OCI-LY7 (cell line): ENCODE measurements at regions of chr1 and their contacts with region 1.

Region 1: GRCh38 chr1:111570781-111571181 is 48.8 kb upstream of the RAP1A start:
- DNase-seq: peak; percentile 61
- H3K4me3 ChIP-seq: no peak overlapping the region
- H3K27ac ChIP-seq: no peak overlapping the region
- H3K4me1 ChIP-seq: peaks cover 6% of the 10 kb centered on the region
- CTCF ChIP-seq: peak; percentile 78

Region 2: GRCh38 chr1:111656086-111657017 is 85.6 kb after region 1 on chr1:
- CTCF ChIA-PET with region 1: no interaction called
- POLR2A ChIA-PET with region 1: no interaction called
- intact Hi-C with region 1: loop called (anchors 5 kb)
- DNase-seq: peak; percentile 48
- H3K4me3 ChIP-seq: no peak overlapping the region
- H3K27ac ChIP-seq: no peak overlapping the region
- H3K4me1 ChIP-seq: peaks cover 13% of the 10 kb centered on the region
- CTCF ChIP-seq: peak; percentile 86